AG04450 (cell line): ENCODE measurements at regions of chr3 and their contacts with region 1.

Region 1: DNA sequence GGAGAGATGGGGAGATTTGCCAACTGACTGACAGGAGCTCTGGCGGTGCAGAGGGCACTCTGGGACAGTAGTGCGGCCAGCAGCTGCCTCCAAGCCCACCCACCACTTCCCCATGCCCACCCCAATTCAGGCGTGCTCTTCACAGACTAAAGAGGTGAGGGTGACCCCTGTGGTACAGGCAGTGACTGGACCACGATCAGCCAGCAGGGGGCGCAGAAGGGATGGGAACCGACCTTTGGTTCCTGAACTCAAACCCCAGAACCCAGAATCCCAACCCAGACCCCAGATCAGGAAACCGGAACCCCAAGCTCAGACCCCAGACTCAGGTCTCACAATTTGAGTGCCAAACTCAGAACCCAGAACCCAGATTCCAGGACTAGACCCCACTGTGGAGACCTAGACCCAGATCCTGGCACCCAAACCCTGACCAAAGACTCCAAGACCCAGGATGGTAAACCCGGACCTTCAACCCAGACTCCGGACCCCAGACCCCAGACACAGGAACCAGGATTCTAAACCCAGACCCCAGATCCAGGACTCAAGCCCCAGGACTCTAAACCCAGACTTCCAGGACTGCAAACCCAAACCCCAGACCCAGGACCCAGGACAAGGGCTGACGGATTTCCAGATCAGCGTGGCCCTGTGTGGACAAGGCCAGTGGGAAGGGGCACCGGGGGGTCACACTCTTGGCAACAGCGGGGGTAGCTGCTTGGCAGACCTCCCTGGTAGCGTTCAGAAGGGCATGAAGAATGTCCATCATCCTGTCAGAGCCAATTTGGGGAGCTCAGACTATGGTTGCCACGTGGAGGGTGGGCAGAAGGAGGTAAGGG is 3.7 kb upstream of the MYL3 start:
- DNase-seq: no peak
- H3K4me3 ChIP-seq: no peak overlapping the region
- H3K27ac ChIP-seq: no peak overlapping the region
- H3K27me3 ChIP-seq: peaks cover 46% of the 10 kb centered on the region
- CTCF ChIP-seq: peak; percentile 90

Region 2: GRCh38 chr3:46882377-46883053 is 15.6 kb after region 1 on chr3:
- CTCF ChIA-PET with region 1: interaction called, 11 read pairs
- POLR2A ChIA-PET with region 1: no interaction called
- DNase-seq: no peak
- H3K4me3 ChIP-seq: peak overlapping the region; percentile 49
- H3K27ac ChIP-seq: no peak overlapping the region
- H3K27me3 ChIP-seq: peaks cover 61% of the 10 kb centered on the region
- CTCF ChIP-seq: no peak

Region 3: DNA sequence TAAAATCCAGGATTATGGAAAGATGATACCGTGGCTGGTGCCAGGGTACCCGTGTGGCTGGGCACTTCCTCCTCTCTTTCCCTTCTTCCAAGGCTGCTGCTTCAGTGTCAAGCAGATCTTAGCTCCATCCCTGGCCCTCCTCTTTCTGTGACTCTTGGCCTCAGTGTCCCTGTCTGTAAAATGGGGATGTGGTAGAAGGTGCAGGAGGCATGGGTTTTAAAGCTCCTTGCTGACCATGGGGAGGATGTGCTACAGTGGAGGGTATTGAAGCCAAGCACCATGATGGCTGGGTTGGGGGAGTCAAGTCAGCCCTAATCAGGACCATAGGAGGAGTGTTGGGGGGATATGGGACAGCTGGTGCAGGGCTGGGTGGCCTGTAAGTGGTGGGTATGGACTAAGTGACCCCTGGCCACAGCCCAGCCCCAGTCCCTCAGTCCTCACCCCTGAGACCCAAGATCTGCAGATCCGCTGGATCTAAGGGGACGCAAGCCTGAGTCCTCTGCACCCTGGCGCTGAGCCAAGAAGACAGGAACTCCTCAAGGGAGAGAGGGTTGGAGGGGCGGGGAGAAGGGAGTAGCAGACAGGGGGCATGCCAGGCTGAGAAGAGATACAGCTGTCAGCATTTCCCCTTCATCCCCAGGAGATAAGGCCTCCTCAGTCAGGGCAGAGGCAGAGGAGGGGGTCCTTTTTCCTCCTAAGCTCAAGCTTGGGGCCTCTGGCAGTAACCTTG is 22.6 kb after region 1 on chr3:
- CTCF ChIA-PET with region 1: interaction called, 57 read pairs
- POLR2A ChIA-PET with region 1: no interaction called
- DNase-seq: no peak
- H3K4me3 ChIP-seq: no peak overlapping the region
- H3K27ac ChIP-seq: no peak overlapping the region
- H3K27me3 ChIP-seq: peaks cover 83% of the 10 kb centered on the region
- CTCF ChIP-seq: no peak

Region 4: GRCh38 chr3:46909535-46910442 is 42.9 kb after region 1 on chr3:
- CTCF ChIA-PET with region 1: interaction called, 31 read pairs
- POLR2A ChIA-PET with region 1: no interaction called
- DNase-seq: peak; percentile 53
- H3K4me3 ChIP-seq: no peak overlapping the region
- H3K27ac ChIP-seq: no peak overlapping the region
- H3K27me3 ChIP-seq: no peaks in the 10 kb centered on the region
- CTCF ChIP-seq: peak; percentile 96